ENCODE measurements at regions of chr12 and their contacts with region 1.

Region 1: GRCh38 chr12:112906712-112907414 is at the start of gene OAS1:
- DNase-seq: peak in 6 of 9 experiments; percentile 6 to 68 (median 52)
- ATAC-seq: peak; percentile 77
- H3K4me3 ChIP-seq: peak within 1 kb of the TSS; percentile 61 to 72
- H3K4me3 Mint-ChIP-seq: peak within 1 kb of the TSS; percentile 95
- H3K27ac ChIP-seq: peak within 1 kb of the TSS; percentile 54 to 68
- H3K27ac Mint-ChIP-seq: peak within 1 kb of the TSS; percentile 90
- H3K4me1 ChIP-seq: peaks cover 39% of the 10 kb centered on the region
- H3K4me1 Mint-ChIP-seq: peaks cover 69% of the 10 kb centered on the region
- H3K27me3 ChIP-seq: no peaks in the 10 kb centered on the region
- H3K27me3 Mint-ChIP-seq: no peaks in the 10 kb centered on the region
- CTCF ChIP-seq: no peak
- total RNA-seq, gene OAS1: 1.1 to 1.7 TPM

Region 2: GRCh38 chr12:112738531-112738930 is 168.3 kb before region 1 on chr12:
- CTCF ChIA-PET with region 1: no interaction called
- POLR2A ChIA-PET with region 1: no interaction called
- intact Hi-C with region 1: no loop called
- DNase-seq: no peak
- ATAC-seq: no peak
- H3K4me3 ChIP-seq: no peak overlapping the region
- H3K4me3 Mint-ChIP-seq: no peak overlapping the region
- H3K27ac ChIP-seq: no peak overlapping the region
- H3K27ac Mint-ChIP-seq: no peak overlapping the region
- H3K4me1 ChIP-seq: no peaks in the 10 kb centered on the region
- H3K4me1 Mint-ChIP-seq: no peaks in the 10 kb centered on the region
- H3K27me3 ChIP-seq: no peaks in the 10 kb centered on the region
- H3K27me3 Mint-ChIP-seq: peaks cover 28% of the 10 kb centered on the region
- CTCF ChIP-seq: no peak

Region 3: DNA sequence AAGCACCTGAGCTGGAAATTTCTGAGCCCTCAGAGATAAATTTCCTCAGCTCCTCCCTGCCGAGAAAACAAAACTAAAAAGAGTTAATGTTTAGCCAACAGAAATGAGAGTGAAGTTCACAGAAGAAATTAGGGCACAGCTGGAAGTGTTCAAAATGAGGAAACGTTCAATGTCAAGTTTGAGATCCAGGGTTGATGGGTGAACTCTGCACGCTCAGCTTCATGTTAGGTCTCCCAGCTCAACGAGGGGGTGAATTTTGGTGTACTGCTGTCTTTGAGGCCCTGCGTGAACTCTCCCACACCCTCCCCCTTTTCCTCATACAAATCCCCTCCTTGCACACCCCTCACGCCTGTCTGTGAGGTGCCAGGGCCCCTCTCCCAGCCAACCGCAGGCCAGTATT is 18.1 kb after region 1 on chr12:
- CTCF ChIA-PET with region 1: interaction called, 3 read pairs
- POLR2A ChIA-PET with region 1: no interaction called
- intact Hi-C with region 1: loop called in 1 of 2 experiments (anchors 2 kb)
- DNase-seq: no peak
- ATAC-seq: no peak
- H3K4me3 ChIP-seq: no peak overlapping the region
- H3K4me3 Mint-ChIP-seq: no peak overlapping the region
- H3K27ac ChIP-seq: no peak overlapping the region
- H3K27ac Mint-ChIP-seq: no peak overlapping the region
- H3K4me1 ChIP-seq: no peaks in the 10 kb centered on the region
- H3K4me1 Mint-ChIP-seq: no peaks in the 10 kb centered on the region
- H3K27me3 ChIP-seq: no peaks in the 10 kb centered on the region
- H3K27me3 Mint-ChIP-seq: no peaks in the 10 kb centered on the region
- CTCF ChIP-seq: no peak

Region 4: GRCh38 chr12:113358381-113359132 is 451.7 kb after region 1 on chr12 and contains the start of gene PLBD2:
- CTCF ChIA-PET with region 1: no interaction called
- POLR2A ChIA-PET with region 1: no interaction called
- intact Hi-C with region 1: loop called in 1 of 2 experiments (anchors 10 kb)
- DNase-seq: peak; percentile 92 to 97 (median 94)
- ATAC-seq: peak; percentile 97
- H3K4me3 ChIP-seq: peak within 1 kb of the TSS; percentile 72 to 79
- H3K4me3 Mint-ChIP-seq: peak within 1 kb of the TSS; percentile 91
- H3K27ac ChIP-seq: peak within 1 kb of the TSS; percentile 81 to 84
- H3K27ac Mint-ChIP-seq: peak within 1 kb of the TSS; percentile 96
- H3K4me1 ChIP-seq: peaks cover 14% of the 10 kb centered on the region
- H3K4me1 Mint-ChIP-seq: peaks cover 16% of the 10 kb centered on the region
- H3K27me3 ChIP-seq: peaks cover 0 to 2% of the 10 kb centered on the region in 2 experiments
- H3K27me3 Mint-ChIP-seq: no peaks in the 10 kb centered on the region
- CTCF ChIP-seq: no peak
- total RNA-seq, gene PLBD2: 9.2 to 9.9 TPM

Measured in CD8-positive, alpha-beta T cell (primary cell).